ENCODE measurements at regions of chr19 and their contacts with region 1.

Region 1: DNA sequence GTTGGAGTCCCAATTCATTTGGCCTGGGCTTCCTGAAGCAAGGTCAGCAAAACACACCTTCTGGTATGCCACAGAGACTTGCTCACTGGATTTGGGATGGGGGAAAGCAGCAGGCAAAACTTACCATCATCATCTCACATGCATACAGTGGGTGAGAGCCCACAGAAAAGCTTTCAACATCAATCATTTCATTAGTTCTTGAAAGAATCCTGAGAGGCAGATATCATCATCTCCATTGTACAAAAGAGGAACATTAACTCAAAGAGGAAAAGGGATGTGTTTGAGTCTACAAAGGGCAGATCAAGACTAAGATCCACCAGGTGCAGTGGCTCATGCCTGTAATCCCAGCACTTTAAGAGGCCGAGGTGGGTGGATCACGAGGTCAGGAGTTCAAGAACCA is 6.4 kb downstream of the WDR87 start:
- DNase-seq: no peak
- ATAC-seq: no peak
- H3K4me3 ChIP-seq: no peak overlapping the region
- H3K4me3 Mint-ChIP-seq: no peak overlapping the region
- H3K27ac ChIP-seq: no peak overlapping the region
- H3K27ac Mint-ChIP-seq: no peak overlapping the region
- H3K4me1 ChIP-seq: no peaks in the 10 kb centered on the region
- H3K4me1 Mint-ChIP-seq: peaks cover 2% of the 10 kb centered on the region
- H3K27me3 ChIP-seq: no peaks in the 10 kb centered on the region
- H3K27me3 Mint-ChIP-seq: no peaks in the 10 kb centered on the region
- CTCF ChIP-seq: no peak

Region 2: DNA sequence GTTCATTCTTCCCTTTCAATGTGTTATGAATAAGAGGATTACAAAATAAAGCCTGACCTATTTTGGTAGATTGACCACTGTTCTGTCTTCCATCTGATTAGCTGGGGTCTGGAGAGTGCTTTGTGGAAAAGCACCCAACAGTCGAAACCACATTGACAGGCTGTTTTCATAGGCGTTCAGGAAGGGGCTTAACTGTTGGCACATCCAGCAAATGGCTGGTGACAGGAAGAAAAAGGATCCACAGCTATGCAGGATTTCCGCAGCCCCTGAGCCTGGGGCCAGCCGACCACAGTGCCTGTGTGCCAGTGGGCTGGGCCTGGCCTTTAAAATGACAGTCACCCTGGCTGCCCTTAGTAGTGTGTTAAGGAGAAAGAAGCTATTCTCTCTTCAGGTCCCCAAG is 120.3 kb after region 1 on chr19:
- CTCF ChIA-PET with region 1: no interaction called
- POLR2A ChIA-PET with region 1: no interaction called
- intact Hi-C with region 1: no loop called
- DNase-seq: no peak
- ATAC-seq: no peak
- H3K4me3 ChIP-seq: no peak overlapping the region
- H3K4me3 Mint-ChIP-seq: no peak overlapping the region
- H3K27ac ChIP-seq: no peak overlapping the region
- H3K27ac Mint-ChIP-seq: no peak overlapping the region
- H3K4me1 ChIP-seq: no peaks in the 10 kb centered on the region
- H3K4me1 Mint-ChIP-seq: peaks cover 2% of the 10 kb centered on the region
- H3K27me3 ChIP-seq: no peaks in the 10 kb centered on the region
- H3K27me3 Mint-ChIP-seq: no peaks in the 10 kb centered on the region
- CTCF ChIP-seq: no peak

Region 3: GRCh38 chr19:38095411-38096308 is 195.7 kb after region 1 on chr19:
- CTCF ChIA-PET with region 1: interaction called, 15 read pairs
- POLR2A ChIA-PET with region 1: no interaction called
- intact Hi-C with region 1: loop called (anchors 1 to 2 kb)
- DNase-seq: peak in 8 of 9 experiments; percentile 34 to 69 (median 50)
- ATAC-seq: peak; percentile 44
- H3K4me3 ChIP-seq: no peak overlapping the region
- H3K4me3 Mint-ChIP-seq: no peak overlapping the region
- H3K27ac ChIP-seq: no peak overlapping the region
- H3K27ac Mint-ChIP-seq: peak overlapping the region; percentile 15
- H3K4me1 ChIP-seq: no peaks in the 10 kb centered on the region
- H3K4me1 Mint-ChIP-seq: peaks cover 5% of the 10 kb centered on the region
- H3K27me3 ChIP-seq: no peaks in the 10 kb centered on the region
- H3K27me3 Mint-ChIP-seq: no peaks in the 10 kb centered on the region
- CTCF ChIP-seq: peak; percentile 46

Region 4: GRCh38 chr19:38142176-38143035 is 242.4 kb after region 1 on chr19:
- CTCF ChIA-PET with region 1: interaction called, 5 read pairs
- POLR2A ChIA-PET with region 1: no interaction called
- intact Hi-C with region 1: loop called (anchors 1 to 2 kb)
- DNase-seq: peak in 6 of 9 experiments; percentile 7 to 51 (median 38)
- ATAC-seq: no peak
- H3K4me3 ChIP-seq: no peak overlapping the region
- H3K4me3 Mint-ChIP-seq: no peak overlapping the region
- H3K27ac ChIP-seq: no peak overlapping the region
- H3K27ac Mint-ChIP-seq: no peak overlapping the region
- H3K4me1 ChIP-seq: no peaks in the 10 kb centered on the region
- H3K4me1 Mint-ChIP-seq: no peaks in the 10 kb centered on the region
- H3K27me3 ChIP-seq: no peaks in the 10 kb centered on the region
- H3K27me3 Mint-ChIP-seq: no peaks in the 10 kb centered on the region
- CTCF ChIP-seq: no peak